SK-N-SH (cell line): ENCODE measurements at regions of chr17 and their contacts with region 1.

Region 1: DNA sequence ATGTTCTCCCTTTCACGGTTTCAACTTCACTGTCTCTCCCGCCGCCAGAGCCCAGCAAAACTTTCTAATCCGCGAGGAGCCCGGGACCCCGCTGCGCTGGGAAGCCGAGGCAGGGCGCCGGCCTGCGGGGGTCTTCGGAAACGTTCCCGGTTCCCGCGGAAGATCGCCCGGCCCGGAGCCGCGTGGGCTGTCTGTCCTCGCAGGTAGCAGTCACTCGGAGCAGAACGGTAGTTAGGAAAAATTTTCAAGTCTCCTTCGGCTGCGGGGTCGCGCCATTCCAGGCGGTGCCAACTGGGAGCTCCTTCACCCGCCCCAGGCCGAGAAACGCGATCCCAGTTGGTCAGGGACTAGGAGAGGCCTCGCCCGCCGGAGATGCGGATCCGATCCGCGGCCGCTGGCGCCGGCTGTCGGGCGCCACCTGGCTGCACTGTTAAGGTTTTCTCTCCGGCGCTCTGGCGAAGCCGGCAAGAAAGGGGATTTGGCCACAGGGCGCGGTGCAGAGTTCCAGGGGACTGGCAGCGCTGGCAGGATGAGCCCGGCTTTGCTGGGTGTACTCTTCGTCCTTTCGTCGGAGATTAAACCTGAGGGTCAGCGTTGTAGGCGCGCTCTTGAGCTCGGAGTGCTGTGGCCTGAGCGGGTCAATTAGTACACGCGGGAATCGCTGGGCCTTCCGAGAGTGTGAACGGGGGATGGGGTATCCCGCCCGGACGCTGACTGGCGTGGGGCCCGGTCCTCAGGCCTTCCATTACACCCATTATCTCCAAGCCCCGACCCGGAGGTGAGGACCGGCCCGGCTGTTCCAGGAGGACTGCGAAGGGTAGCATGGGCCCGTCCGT is 135.4 kb downstream of the KCNJ12 start:
- DNase-seq: peak; percentile 89
- H3K4me3 ChIP-seq: peak overlapping the region; percentile 49 to 60; a peak in 3 of 4 replicates
- H3K27ac ChIP-seq: no peak overlapping the region
- H3K4me1 ChIP-seq: no peaks in the 10 kb centered on the region; a peak in 1 of 4 replicates
- H3K27me3 ChIP-seq: no peaks in the 10 kb centered on the region
- CTCF ChIP-seq: peak; percentile 63
- EP300 ChIP-seq: no peak
- RAD21 ChIP-seq: peak; percentile 75

Region 2: GRCh38 chr17:21126645-21127510 is 384.7 kb before region 1 on chr17 and contains the start of gene DHRS7B:
- CTCF ChIA-PET with region 1: interaction called, 30 read pairs
- POLR2A ChIA-PET with region 1: no interaction called
- DNase-seq: peak; percentile 96
- H3K4me3 ChIP-seq: peak within 1 kb of the TSS; percentile 68 to 76
- H3K27ac ChIP-seq: peak within 1 kb of the TSS; percentile 60 to 79; a peak in 3 of 4 replicates
- H3K4me1 ChIP-seq: peaks cover 4 to 8% of the 10 kb centered on the region in 2 experiments; a peak in 3 of 4 replicates
- H3K27me3 ChIP-seq: no peaks in the 10 kb centered on the region
- CTCF ChIP-seq: no peak
- EP300 ChIP-seq: no peak
- RAD21 ChIP-seq: no peak
- polyA plus RNA-seq, gene DHRS7B: 17.8 and 24.2 TPM in 2 replicates

Region 3: GRCh38 chr17:21218831-21219380 is 292.7 kb before region 1 on chr17:
- CTCF ChIA-PET with region 1: no interaction called
- POLR2A ChIA-PET with region 1: no interaction called
- DNase-seq: no peak
- H3K4me3 ChIP-seq: no peak overlapping the region
- H3K27ac ChIP-seq: no peak overlapping the region
- H3K4me1 ChIP-seq: peaks cover 0 to 6% of the 10 kb centered on the region in 2 experiments; a peak in 1 of 4 replicates
- H3K27me3 ChIP-seq: no peaks in the 10 kb centered on the region
- CTCF ChIP-seq: no peak
- EP300 ChIP-seq: no peak
- RAD21 ChIP-seq: no peak

Region 4: GRCh38 chr17:21284319-21285163 is 227.0 kb before region 1 on chr17 and contains the start of gene MAP2K3:
- CTCF ChIA-PET with region 1: interaction called, 70 read pairs
- POLR2A ChIA-PET with region 1: no interaction called
- DNase-seq: peak; percentile 99
- H3K4me3 ChIP-seq: peak within 1 kb of the TSS; percentile 90 to 91
- H3K27ac ChIP-seq: peak within 1 kb of the TSS; percentile 67 to 98
- H3K4me1 ChIP-seq: peaks cover 35 to 56% of the 10 kb centered on the region in 2 experiments
- H3K27me3 ChIP-seq: no peaks in the 10 kb centered on the region
- CTCF ChIP-seq: no peak
- EP300 ChIP-seq: no peak
- RAD21 ChIP-seq: no peak
- polyA plus RNA-seq, gene MAP2K3: 21.2 and 30.0 TPM in 2 replicates

Region 5: DNA sequence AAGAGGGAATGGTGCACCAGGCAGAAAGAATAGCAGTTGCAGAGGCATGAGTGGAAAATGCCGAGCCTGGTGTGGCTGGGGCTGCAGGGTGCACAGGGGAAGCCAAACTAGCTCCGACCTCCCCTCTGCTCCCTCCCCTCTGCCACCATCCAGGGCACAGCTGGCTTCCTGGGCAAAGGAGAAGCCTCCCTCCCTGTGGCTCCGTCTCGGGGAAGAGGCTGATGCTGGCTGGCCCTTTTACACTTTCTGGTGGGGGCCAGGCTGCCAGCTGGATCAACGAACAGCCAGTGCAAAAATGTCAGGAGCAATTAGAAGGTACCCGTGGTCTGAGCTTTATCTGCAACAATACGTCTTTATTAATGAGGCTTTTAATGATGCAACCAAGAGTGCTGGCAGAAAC is 172.6 kb before region 1 on chr17:
- CTCF ChIA-PET with region 1: no interaction called
- POLR2A ChIA-PET with region 1: no interaction called
- DNase-seq: no peak
- H3K4me3 ChIP-seq: no peak overlapping the region
- H3K27ac ChIP-seq: no peak overlapping the region
- H3K4me1 ChIP-seq: peaks cover 0 to 10% of the 10 kb centered on the region in 2 experiments; a peak in 1 of 4 replicates
- H3K27me3 ChIP-seq: no peaks in the 10 kb centered on the region
- CTCF ChIP-seq: no peak
- EP300 ChIP-seq: no peak
- RAD21 ChIP-seq: no peak

Region 6: DNA sequence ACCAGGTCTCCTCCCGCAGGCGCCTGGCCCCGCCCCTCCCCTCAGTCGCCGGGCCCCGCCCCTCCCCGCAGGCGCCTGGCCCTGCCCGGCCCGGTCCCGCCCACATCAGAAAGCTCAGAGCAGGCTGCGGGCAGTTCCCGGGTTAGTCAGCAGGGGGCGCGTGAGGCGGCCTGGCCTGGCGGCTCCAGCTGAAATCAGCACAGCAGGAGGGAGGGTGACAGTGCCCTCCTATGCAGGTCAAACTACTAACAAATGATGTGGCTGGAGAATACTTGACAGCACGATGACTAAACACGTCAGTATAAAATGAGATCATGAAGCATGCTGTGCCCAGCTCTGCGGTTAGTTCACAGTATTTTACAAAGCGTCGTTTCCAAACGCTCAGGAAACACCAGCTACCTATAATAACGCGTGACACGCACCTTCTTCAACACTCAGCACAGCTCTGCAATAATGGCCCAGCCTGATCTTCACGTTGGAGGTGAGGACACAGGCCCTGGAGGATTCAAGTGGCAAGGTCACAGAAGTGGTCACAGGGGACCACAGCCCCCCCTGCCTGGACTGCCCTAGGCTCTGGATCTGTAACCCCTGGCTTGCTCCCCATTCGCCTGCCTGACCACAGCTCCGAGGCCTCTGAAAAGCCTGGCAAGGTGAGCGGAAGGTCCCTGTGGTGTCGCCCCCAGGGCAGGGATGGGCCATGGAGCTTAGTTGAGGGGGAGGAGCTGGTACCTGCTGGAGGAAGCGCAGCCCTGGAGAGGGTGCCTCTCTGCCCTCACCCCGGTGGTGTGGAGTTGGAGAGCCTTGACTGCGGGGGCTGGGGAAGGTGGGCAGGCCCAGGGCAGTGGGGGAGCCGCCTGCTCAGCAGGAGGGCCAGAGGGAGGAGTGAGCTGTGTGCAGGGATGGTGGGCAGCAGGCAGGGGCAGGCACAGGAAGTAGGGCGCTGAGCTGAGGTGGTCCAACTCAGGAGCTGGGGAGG is 54.2 kb before region 1 on chr17:
- CTCF ChIA-PET with region 1: interaction called, 140 read pairs
- POLR2A ChIA-PET with region 1: interaction called, 4 read pairs
- DNase-seq: peak; percentile 96
- H3K4me3 ChIP-seq: no peak overlapping the region; a peak in 1 of 4 replicates
- H3K27ac ChIP-seq: no peak overlapping the region
- H3K4me1 ChIP-seq: peaks cover 0 to 13% of the 10 kb centered on the region in 2 experiments; a peak in 1 of 4 replicates
- H3K27me3 ChIP-seq: no peaks in the 10 kb centered on the region
- CTCF ChIP-seq: peak; percentile 88
- EP300 ChIP-seq: no peak
- RAD21 ChIP-seq: peak; percentile 76

Region 7: DNA sequence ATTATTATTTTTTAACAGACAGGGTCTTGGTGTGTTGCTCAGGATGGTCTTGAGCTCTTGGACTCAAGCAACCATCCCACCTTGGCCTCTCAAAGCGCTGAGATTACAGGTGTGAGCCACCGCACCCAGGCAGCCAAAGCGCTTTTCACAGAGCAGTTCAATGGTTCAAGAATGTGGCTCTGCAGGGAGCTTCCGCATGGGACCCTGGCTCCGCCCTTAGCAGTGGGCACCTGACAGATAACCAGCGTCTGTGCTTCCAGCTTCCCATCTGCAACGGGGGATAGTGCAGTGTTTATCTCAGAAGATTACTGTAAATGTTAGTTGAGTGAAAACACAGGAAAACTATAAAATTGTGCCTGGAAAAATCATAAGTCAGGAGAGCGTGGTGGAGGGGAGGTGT is 36.0 kb before region 1 on chr17:
- CTCF ChIA-PET with region 1: interaction called, 33 read pairs
- POLR2A ChIA-PET with region 1: no interaction called
- DNase-seq: no peak
- H3K4me3 ChIP-seq: no peak overlapping the region
- H3K27ac ChIP-seq: no peak overlapping the region
- H3K4me1 ChIP-seq: peaks cover 0 to 14% of the 10 kb centered on the region in 2 experiments; a peak in 1 of 4 replicates
- H3K27me3 ChIP-seq: peaks cover 16% of the 10 kb centered on the region
- CTCF ChIP-seq: no peak
- EP300 ChIP-seq: no peak
- RAD21 ChIP-seq: no peak

Region 8: GRCh38 chr17:21524211-21524591 is 12.6 kb after region 1 on chr17:
- CTCF ChIA-PET with region 1: interaction called, 61 read pairs
- POLR2A ChIA-PET with region 1: no interaction called
- DNase-seq: no peak
- H3K4me3 ChIP-seq: no peak overlapping the region
- H3K27ac ChIP-seq: no peak overlapping the region
- H3K4me1 ChIP-seq: no peaks in the 10 kb centered on the region; a peak in 1 of 4 replicates
- H3K27me3 ChIP-seq: no peaks in the 10 kb centered on the region; the same call in 1 of the 2 replicates
- CTCF ChIP-seq: no peak
- EP300 ChIP-seq: no peak
- RAD21 ChIP-seq: no peak

Region 9: GRCh38 chr17:21551081-21551881 is 39.7 kb after region 1 on chr17:
- CTCF ChIA-PET with region 1: interaction called, 16 read pairs
- POLR2A ChIA-PET with region 1: no interaction called
- DNase-seq: peak; percentile 98
- H3K4me3 ChIP-seq: peak overlapping the region; percentile 60 to 85
- H3K27ac ChIP-seq: peak overlapping the region in 1 of 2 experiments; percentile 75; a peak in 2 of 4 replicates
- H3K4me1 ChIP-seq: peaks cover 7 to 8% of the 10 kb centered on the region in 2 experiments; a peak in 3 of 4 replicates
- H3K27me3 ChIP-seq: no peaks in the 10 kb centered on the region
- CTCF ChIP-seq: no peak
- EP300 ChIP-seq: no peak
- RAD21 ChIP-seq: no peak

Region 10: GRCh38 chr17:21573961-21574610 is 62.5 kb after region 1 on chr17:
- CTCF ChIA-PET with region 1: no interaction called
- POLR2A ChIA-PET with region 1: no interaction called
- DNase-seq: peak; percentile 81
- H3K4me3 ChIP-seq: peak overlapping the region; percentile 58 to 67
- H3K27ac ChIP-seq: no peak overlapping the region
- H3K4me1 ChIP-seq: peaks cover 0 to 2% of the 10 kb centered on the region in 2 experiments; a peak in 1 of 4 replicates
- H3K27me3 ChIP-seq: no peaks in the 10 kb centered on the region
- CTCF ChIP-seq: no peak
- EP300 ChIP-seq: no peak
- RAD21 ChIP-seq: no peak

Region 11: GRCh38 chr17:21742326-21742725 is 230.7 kb after region 1 on chr17:
- CTCF ChIA-PET with region 1: no interaction called
- POLR2A ChIA-PET with region 1: no interaction called
- DNase-seq: peak; percentile 14
- H3K4me3 ChIP-seq: no peak overlapping the region
- H3K27ac ChIP-seq: no peak overlapping the region
- H3K4me1 ChIP-seq: no peaks in the 10 kb centered on the region
- H3K27me3 ChIP-seq: peaks cover 6% of the 10 kb centered on the region
- CTCF ChIP-seq: no peak
- EP300 ChIP-seq: no peak
- RAD21 ChIP-seq: no peak